ENCODE measurements at regions of chr15 and their contacts with region 1.

Region 1: GRCh38 chr15:92714477-92715401 is 59.2 kb upstream of the FAM174B start:
- DNase-seq: peak; percentile 61
- H3K4me3 Mint-ChIP-seq: peak overlapping the region; percentile 73
- H3K27ac Mint-ChIP-seq: no peak overlapping the region
- H3K4me1 Mint-ChIP-seq: peaks cover 7% of the 10 kb centered on the region
- H3K27me3 Mint-ChIP-seq: peaks cover 30% of the 10 kb centered on the region

Region 2: GRCh38 chr15:92277776-92278175 is 437.0 kb before region 1 on chr15:
- intact Hi-C with region 1: loop called (anchors 10 kb)
- DNase-seq: no peak
- H3K4me3 Mint-ChIP-seq: no peak overlapping the region
- H3K27ac Mint-ChIP-seq: no peak overlapping the region
- H3K4me1 Mint-ChIP-seq: no peaks in the 10 kb centered on the region
- H3K27me3 Mint-ChIP-seq: peaks cover 4% of the 10 kb centered on the region

Region 3: GRCh38 chr15:92429378-92430068 is 285.2 kb before region 1 on chr15:
- intact Hi-C with region 1: no loop called
- DNase-seq: no peak
- H3K4me3 Mint-ChIP-seq: no peak overlapping the region
- H3K27ac Mint-ChIP-seq: no peak overlapping the region
- H3K4me1 Mint-ChIP-seq: no peaks in the 10 kb centered on the region
- H3K27me3 Mint-ChIP-seq: peaks cover 16% of the 10 kb centered on the region

Region 4: DNA sequence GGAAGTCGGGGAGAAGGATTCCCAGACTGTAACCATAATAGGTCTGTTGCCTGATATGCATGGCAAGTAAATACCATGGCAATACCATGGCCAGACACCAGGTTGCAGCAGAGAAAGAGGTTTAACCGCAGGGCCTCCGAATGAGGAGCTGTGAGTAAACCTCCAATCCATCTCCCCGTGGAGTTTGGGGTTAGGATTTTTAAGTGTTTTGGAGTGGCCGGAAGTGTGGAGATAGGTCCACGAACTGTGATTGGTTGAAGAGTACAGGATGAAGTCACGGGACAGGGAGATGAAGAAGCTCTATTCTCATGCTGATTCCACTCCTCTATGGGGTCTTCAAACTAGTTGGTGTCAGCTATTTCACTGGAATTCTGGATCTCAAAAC is 193.1 kb before region 1 on chr15:
- intact Hi-C with region 1: loop called (anchors 1 kb)
- DNase-seq: peak; percentile 21
- H3K4me3 Mint-ChIP-seq: no peak overlapping the region
- H3K27ac Mint-ChIP-seq: no peak overlapping the region
- H3K4me1 Mint-ChIP-seq: peaks cover 6% of the 10 kb centered on the region
- H3K27me3 Mint-ChIP-seq: no peaks in the 10 kb centered on the region

Region 5: DNA sequence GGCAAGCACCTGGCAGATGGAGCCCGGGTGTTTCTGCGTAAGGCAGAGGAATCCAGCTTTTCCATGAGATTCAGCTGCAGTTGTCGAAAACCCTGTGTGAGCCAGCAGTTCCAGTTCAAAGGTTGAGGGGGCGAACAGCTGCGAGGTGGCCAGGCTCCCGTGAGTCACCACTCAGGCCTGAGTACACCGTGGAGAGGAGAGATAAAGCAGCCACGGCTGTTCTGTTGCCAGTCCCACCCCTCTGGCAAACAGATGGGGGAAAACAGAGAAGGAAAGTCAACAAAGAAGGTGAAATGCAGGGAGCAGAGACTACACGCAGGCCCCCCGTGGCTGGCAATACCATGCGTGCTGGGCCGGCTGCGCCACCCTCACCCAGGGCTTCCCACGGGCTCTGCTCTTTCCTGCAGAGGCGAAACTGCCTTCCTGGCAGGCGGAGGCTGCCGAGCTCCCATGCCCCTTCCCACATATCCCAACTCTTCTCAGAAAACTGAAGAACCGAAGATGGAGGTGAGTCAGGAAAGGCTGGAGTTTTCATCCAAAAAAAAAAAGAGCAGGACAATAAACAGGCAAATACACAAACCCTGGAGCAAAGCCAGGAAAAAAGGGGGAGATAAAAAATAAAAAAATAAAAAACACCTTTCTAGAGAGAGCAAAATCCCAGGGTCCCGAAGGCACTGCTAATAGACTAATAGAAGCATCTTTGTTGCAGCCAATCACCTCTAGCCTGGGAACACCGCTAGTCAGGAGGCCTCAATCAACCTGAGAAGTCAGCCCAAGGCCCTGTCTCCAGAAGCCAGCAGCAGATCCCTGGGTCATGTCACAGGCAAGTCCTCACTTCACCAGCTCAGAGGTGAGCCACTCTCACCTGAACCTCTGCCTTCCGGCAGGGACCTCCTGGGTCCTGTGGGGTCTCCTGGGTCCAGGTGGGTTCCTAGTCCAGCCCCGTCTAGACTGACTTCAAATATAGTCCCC is 96.9 kb before region 1 on chr15:
- intact Hi-C with region 1: loop called (anchors 10 kb)
- DNase-seq: no peak
- H3K4me3 Mint-ChIP-seq: no peak overlapping the region
- H3K27ac Mint-ChIP-seq: no peak overlapping the region
- H3K4me1 Mint-ChIP-seq: no peaks in the 10 kb centered on the region
- H3K27me3 Mint-ChIP-seq: peaks cover 3% of the 10 kb centered on the region

Measured in activated T-helper 2 cell treated with anti-CD3 and anti-CD28 coated beads, Interferon-gamma antibody, Interleukin-2, Interleukin-4, amounts not matched to agents 10 μg/mL and 5 μg/mL and 100 μg/mL, durations not matched to agents 14 hours and 24 hours and 36 hours (primary cell).